ENCODE measurements at regions of chr10 and their contacts with region 1.

Region 1: DNA sequence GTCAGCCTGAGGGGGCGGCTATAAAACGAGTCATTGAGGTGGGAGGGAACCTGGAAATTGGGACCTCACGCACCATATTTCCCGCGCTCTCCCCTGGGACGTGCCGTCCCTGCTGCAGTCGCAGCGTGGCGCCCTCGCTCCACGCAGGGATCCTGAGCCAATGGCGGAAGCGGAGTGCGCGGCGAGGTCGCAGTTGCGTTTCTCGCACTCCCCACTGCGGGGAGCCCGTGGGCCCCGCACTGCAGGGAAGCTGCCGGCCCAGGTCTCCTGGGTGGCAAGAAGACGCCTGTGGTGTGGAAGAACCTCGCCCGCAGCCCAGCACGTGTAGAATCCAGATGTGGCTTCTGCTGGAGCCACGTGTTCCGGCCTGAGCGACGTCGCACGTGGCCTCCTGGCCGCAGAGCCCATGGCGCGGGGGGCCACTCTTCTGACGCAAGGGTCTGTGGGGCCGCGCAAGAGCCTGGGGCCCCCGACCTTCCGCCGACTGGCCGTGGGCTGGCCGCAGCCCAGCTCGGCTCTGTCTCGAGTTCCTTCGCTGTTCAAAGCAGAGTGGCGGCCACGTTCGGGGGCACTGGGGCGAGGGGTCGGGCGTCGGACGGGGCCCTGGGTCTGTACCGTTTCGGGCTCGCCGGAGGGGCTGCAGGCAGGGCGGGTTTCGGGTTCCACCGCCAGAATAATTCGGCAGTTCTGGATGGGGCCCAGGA is 26.4 kb downstream of the HIF1AN start:
- DNase-seq: peak; percentile 87
- ATAC-seq: peak; percentile 94
- H3K4me3 ChIP-seq: peak overlapping the region in 4 of 5 experiments; percentile 5 to 29 (median 13)
- H3K4me3 Mint-ChIP-seq: peak overlapping the region; percentile 69
- H3K27ac ChIP-seq: no peak overlapping the region
- H3K27ac Mint-ChIP-seq: no peak overlapping the region
- H3K4me1 ChIP-seq: peaks cover 17 to 20% of the 10 kb centered on the region in 2 donors
- H3K4me1 Mint-ChIP-seq: peaks cover 20% of the 10 kb centered on the region
- H3K27me3 ChIP-seq: peaks cover 0 to 37% (median 15%) of the 10 kb centered on the region in 4 experiments
- H3K27me3 Mint-ChIP-seq: peaks cover 52% of the 10 kb centered on the region
- CTCF ChIP-seq: peak; percentile 90

Region 2: DNA sequence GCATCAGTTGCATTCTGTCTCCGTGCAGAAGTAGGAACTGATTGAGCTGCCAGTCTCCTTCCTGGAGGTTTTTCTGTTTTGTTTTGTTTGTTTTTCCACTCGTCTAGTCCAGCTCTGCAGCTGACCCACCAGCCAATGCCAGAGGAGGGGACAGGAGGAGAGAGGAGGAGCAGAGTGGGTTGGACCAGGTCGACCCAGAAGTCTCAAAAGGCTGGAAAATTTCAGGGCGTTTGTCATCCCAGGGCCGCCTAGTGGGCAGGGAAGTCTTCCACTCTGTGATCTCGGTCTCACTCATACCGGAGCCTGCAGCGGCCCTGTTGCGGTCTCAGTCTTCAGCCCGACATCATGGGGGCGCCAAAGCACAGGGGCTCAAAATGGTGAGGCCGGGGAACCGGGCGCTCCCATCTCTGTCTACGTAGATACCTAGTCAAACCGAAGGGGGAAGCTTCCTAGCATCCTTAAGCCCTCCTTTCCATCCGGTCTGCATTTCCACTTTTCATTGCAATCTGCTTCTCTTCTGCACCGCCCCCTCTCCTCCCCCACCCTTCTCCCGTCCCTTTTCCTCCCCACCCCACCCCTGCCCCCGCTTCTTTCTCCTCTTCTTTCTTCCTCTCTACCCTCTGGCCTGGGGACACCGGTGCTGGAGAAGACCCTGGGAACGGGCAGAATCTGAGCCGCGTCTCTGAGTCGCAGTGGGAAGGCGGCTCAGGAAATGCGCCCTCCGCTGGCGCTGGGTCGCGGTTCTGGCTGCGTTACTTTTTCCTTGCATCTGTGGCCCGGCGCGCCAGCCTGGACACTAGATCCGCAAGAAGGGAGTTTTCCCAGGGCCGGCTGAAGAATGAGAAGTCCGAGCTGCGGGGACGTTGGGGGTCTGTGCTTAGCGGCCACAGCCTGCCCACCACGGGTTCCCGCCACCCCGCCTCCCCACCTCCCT is 167.0 kb after region 1 on chr10:
- CTCF ChIA-PET with region 1: no interaction called
- POLR2A ChIA-PET with region 1: no interaction called
- intact Hi-C with region 1: no loop called
- DNase-seq: peak; percentile 52
- ATAC-seq: peak; percentile 39
- H3K4me3 ChIP-seq: peak overlapping the region in 2 of 5 experiments; percentile 19 to 45
- H3K4me3 Mint-ChIP-seq: peak overlapping the region; percentile 73
- H3K27ac ChIP-seq: no peak overlapping the region
- H3K27ac Mint-ChIP-seq: no peak overlapping the region
- H3K4me1 ChIP-seq: peaks cover 28 to 32% of the 10 kb centered on the region in 2 donors
- H3K4me1 Mint-ChIP-seq: peaks cover 30% of the 10 kb centered on the region
- H3K27me3 ChIP-seq: peaks cover 0 to 90% (median 50%) of the 10 kb centered on the region in 4 experiments
- H3K27me3 Mint-ChIP-seq: peaks cover 78% of the 10 kb centered on the region
- CTCF ChIP-seq: peak; percentile 16

Region 3: DNA sequence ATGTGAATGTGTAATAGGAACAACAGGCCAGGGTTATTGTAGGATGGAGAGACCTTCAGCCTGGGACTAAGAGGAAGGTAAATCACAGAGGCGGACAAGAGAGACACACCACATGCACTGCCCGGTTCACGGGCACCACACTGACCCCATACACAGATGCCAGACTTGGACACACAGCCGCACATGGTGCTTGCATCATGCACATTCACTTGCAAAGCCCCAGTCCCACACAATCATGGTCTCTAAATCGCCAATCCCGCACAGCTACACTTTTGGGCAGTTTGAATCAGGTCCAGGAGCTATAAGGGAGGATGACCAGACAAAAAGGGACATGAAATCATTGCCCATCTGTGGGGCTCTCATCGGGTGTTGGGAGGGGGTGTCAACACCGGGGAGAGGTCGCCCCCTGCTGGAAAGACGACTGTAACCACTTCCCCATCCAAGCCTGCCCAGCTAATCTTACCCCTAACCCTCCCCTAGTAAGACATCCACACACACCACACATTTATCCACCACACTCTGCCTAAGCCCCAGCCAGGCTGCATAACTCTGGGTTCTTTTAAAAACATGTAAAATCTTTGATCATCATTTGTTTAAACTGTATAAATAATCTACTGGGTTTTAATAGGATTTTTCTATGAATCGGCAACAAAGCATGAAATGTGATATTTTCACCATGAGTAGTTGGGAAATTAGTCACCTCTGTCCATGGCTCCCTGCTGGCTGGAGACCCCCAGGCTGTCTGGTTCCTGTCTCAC is 310.1 kb after region 1 on chr10:
- CTCF ChIA-PET with region 1: interaction called, 11 read pairs
- POLR2A ChIA-PET with region 1: no interaction called
- intact Hi-C with region 1: loop called (anchors 2 kb)
- DNase-seq: peak; percentile 66
- ATAC-seq: peak; percentile 54
- H3K4me3 ChIP-seq: no peak overlapping the region
- H3K4me3 Mint-ChIP-seq: no peak overlapping the region
- H3K27ac ChIP-seq: no peak overlapping the region
- H3K27ac Mint-ChIP-seq: no peak overlapping the region
- H3K4me1 ChIP-seq: no peaks in the 10 kb centered on the region
- H3K4me1 Mint-ChIP-seq: no peaks in the 10 kb centered on the region
- H3K27me3 ChIP-seq: peaks cover 0 to 17% (median 1%) of the 10 kb centered on the region in 4 experiments
- H3K27me3 Mint-ChIP-seq: peaks cover 31% of the 10 kb centered on the region
- CTCF ChIP-seq: peak; percentile 70

Region 4: GRCh38 chr10:101676565-101676964 is 1114.4 kb after region 1 on chr10:
- CTCF ChIA-PET with region 1: no interaction called
- POLR2A ChIA-PET with region 1: interaction called, 12 read pairs
- intact Hi-C with region 1: no loop called
- DNase-seq: no peak
- ATAC-seq: no peak
- H3K4me3 ChIP-seq: no peak overlapping the region
- H3K4me3 Mint-ChIP-seq: no peak overlapping the region
- H3K27ac ChIP-seq: no peak overlapping the region
- H3K27ac Mint-ChIP-seq: no peak overlapping the region
- H3K4me1 ChIP-seq: peaks cover 4 to 6% of the 10 kb centered on the region in 2 donors
- H3K4me1 Mint-ChIP-seq: peaks cover 5% of the 10 kb centered on the region
- H3K27me3 ChIP-seq: no peaks in the 10 kb centered on the region
- H3K27me3 Mint-ChIP-seq: no peaks in the 10 kb centered on the region
- CTCF ChIP-seq: no peak